ENCODE measurements at regions of chr16 and their contacts with region 1.

Region 1: DNA sequence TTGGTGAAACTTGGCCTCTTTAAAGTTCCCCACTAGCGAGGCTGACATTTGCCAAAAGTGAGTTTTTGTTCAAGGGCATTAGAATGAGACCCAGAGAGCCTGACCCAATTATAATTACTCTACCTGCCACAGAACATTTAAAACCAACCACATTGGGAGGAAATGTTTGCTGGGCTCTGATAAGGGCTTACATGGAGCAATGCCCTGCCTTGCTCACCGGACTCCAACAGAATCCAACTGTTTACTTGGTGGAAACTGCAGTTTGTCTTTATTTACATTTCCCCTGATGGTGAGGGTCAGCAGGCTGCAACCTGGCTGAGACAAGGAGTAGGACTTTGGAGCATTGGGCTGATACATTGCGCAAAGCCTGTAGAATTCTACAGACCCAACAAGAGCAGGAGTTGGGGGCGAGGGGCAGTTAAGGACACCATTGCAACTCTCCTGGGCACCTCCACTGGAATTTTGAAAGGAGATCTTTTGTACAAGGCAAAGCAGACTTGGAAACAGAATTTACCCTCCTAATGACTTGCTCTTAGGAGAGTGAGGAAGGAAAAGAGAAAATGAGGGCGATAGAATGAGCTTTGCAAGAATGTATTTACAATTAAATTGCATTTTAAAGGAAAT is 368.6 kb downstream of the SHISA9 start:
- DNase-seq: no peak
- ATAC-seq: no peak
- H3K4me3 ChIP-seq: no peak overlapping the region
- H3K27ac ChIP-seq: no peak overlapping the region
- H3K4me1 ChIP-seq: no peaks in the 10 kb centered on the region
- H3K27me3 ChIP-seq: no peaks in the 10 kb centered on the region

Region 2: GRCh38 chr16:13143551-13143950 is 126.5 kb before region 1 on chr16:
- intact Hi-C with region 1: no loop called
- DNase-seq: no peak
- ATAC-seq: no peak
- H3K4me3 ChIP-seq: no peak overlapping the region
- H3K27ac ChIP-seq: no peak overlapping the region
- H3K4me1 ChIP-seq: no peaks in the 10 kb centered on the region
- H3K27me3 ChIP-seq: no peaks in the 10 kb centered on the region

Region 3: GRCh38 chr16:13322336-13322735 is 52.3 kb after region 1 on chr16:
- intact Hi-C with region 1: loop called in 1 of 4 experiments (anchors 10 kb)
- DNase-seq: no peak
- ATAC-seq: no peak
- H3K4me3 ChIP-seq: no peak overlapping the region
- H3K27ac ChIP-seq: no peak overlapping the region
- H3K4me1 ChIP-seq: no peaks in the 10 kb centered on the region
- H3K27me3 ChIP-seq: no peaks in the 10 kb centered on the region